Activated T-helper 2 cell treated with anti-CD3 and anti-CD28 coated beads, Interferon-gamma antibody, Interleukin-2, Interleukin-4, amounts not matched to agents 10 μg/mL and 5 μg/mL and 100 μg/mL, durations not matched to agents 14 hours and 24 hours and 36 hours (primary cell): ENCODE measurements at regions of chr10 and their contacts with region 1.

Region 1: DNA sequence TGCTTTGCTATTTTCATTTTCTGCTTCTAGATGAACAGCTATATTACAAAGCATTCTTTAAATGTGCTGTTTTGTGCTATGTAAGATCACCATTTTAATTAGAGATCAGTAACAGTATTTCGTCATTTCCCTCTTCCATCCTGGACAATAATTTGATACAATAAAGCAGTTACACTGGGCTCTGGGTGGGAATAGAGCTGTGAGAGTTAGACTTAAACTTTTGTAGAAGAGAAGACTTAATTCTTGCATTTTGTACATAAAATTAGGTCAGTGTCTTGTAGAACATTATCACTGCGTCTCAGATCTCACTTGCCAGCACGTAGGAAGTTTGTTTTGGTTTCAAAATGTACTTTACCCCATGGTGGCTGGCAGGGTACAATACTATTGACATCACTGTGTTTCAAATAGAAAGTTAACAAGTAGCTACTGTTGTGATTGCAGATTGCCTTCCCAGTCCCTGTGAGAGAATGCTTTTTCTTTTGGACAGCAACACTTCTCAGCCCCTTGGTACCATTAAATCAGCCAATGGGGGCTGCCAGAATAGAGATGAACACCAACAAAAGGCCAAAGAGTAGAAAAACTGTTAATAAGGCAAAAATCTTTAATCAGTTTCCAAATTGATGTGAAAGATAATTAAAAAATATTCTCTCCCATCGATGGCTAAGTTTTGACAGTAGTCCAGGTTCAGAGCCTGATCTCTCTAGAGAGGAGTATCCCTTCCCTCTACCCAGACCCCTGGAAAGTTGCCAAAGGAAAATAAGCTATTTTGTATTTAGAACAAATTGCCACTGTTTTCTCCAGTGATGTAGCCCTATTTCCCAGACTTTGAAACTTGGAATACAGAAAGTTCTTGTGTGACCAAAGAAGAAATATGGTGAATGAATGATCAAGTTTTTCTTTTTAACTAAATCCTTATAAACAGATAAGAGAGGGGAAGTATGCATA is 35.1 kb downstream of the SMNDC1 start:
- DNase-seq: no peak
- H3K4me3 Mint-ChIP-seq: peak overlapping the region; percentile 19
- H3K27ac Mint-ChIP-seq: no peak overlapping the region
- H3K4me1 Mint-ChIP-seq: peaks cover 17% of the 10 kb centered on the region
- H3K27me3 Mint-ChIP-seq: peaks cover 66% of the 10 kb centered on the region

Region 2: DNA sequence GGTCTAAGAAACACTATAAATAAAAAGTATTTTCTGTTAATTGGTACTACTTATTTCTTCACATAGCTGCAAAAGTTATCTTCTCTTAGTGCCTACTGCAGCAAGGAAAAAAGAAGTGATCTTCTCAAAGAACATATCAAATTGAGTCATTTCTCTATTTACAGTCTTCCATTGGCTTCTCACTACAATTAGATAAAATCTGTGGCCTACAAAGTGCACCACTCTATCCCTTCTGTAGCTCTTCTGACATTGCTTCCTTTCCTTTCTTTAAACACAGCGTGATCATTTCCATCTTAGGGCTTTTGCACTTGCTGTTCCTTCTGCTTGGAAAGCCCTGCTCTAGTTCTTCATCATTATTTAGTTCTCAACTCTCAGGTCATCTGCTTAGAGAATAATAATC is 17.5 kb before region 1 on chr10:
- intact Hi-C with region 1: loop called (anchors 1 kb)
- DNase-seq: no peak
- H3K4me3 Mint-ChIP-seq: no peak overlapping the region
- H3K27ac Mint-ChIP-seq: no peak overlapping the region
- H3K4me1 Mint-ChIP-seq: peaks cover 31% of the 10 kb centered on the region
- H3K27me3 Mint-ChIP-seq: peaks cover 48% of the 10 kb centered on the region